Dorsolateral prefrontal cortex (tissue), 120 donors: ENCODE measurements at regions of chr2 and their contacts with region 1.

Region 1: GRCh38 chr2:34004936-34005335 is 405.8 kb upstream of the FAM98A start:
- DNase-seq: peak in 5 of 10 donors; percentile 4 to 48 (median 41)
- H3K4me3 ChIP-seq: peak overlapping the region in 26 of 59 donors; percentile 2 to 43 (median 24)
- H3K27ac ChIP-seq: peak overlapping the region in 58 of 59 donors; percentile 6 to 90 (median 77)
- H3K27me3 ChIP-seq: peaks cover 0 to 4% (median 0%) of the 10 kb centered on the region in 45 donors
- CTCF ChIP-seq: no peak

Region 2: DNA sequence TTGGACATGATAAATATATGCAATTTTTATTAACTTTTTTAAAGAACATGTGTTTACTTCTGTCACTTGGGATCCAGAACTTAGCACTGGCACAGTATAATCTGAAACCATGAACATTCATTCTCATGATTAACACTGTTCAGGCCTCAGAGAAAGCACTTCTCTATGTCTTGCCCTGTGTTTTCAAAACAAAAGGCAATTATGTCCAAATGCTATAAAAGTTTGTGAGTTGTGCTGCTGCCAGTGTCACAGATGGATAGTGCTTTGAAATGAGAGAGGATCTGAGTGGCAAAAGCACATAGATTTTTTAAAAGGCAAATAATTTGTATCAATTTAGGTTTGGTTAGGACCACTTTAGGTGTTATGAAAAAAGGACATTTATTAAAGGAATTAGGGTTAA is 64.7 kb after region 1 on chr2:
- intact Hi-C with region 1: loop called in 1 of 2 experiments (anchors 10 kb)
- DNase-seq: peak in 1 of 10 donors; percentile 28
- H3K4me3 ChIP-seq: peak overlapping the region in 4 of 59 donors; percentile 0 to 24 (median 6)
- H3K27ac ChIP-seq: peak overlapping the region; percentile 46 to 97 (median 88)
- H3K27me3 ChIP-seq: no peaks in the 10 kb centered on the region
- CTCF ChIP-seq: peak in 3 of 56 donors; percentile 8 to 17 (median 9)